CD8-positive, alpha-beta T cell (primary cell): ENCODE measurements at regions of chr19 and their contacts with region 1.

Region 1: GRCh38 chr19:12294249-12295158 is at the start of gene ZNF44:
- DNase-seq: peak; percentile 91 to 97 (median 95)
- ATAC-seq: peak; percentile 96
- H3K4me3 ChIP-seq: peak within 1 kb of the TSS; percentile 82 to 85
- H3K4me3 Mint-ChIP-seq: peak within 1 kb of the TSS; percentile 99
- H3K27ac ChIP-seq: peak within 1 kb of the TSS; percentile 75 to 84
- H3K27ac Mint-ChIP-seq: peak within 1 kb of the TSS; percentile 98
- H3K4me1 ChIP-seq: peaks cover 23% of the 10 kb centered on the region
- H3K4me1 Mint-ChIP-seq: peaks cover 43% of the 10 kb centered on the region
- H3K27me3 ChIP-seq: no peaks in the 10 kb centered on the region
- H3K27me3 Mint-ChIP-seq: no peaks in the 10 kb centered on the region
- CTCF ChIP-seq: no peak
- total RNA-seq, gene ZNF44: 21.9 to 22.0 TPM

Region 2: DNA sequence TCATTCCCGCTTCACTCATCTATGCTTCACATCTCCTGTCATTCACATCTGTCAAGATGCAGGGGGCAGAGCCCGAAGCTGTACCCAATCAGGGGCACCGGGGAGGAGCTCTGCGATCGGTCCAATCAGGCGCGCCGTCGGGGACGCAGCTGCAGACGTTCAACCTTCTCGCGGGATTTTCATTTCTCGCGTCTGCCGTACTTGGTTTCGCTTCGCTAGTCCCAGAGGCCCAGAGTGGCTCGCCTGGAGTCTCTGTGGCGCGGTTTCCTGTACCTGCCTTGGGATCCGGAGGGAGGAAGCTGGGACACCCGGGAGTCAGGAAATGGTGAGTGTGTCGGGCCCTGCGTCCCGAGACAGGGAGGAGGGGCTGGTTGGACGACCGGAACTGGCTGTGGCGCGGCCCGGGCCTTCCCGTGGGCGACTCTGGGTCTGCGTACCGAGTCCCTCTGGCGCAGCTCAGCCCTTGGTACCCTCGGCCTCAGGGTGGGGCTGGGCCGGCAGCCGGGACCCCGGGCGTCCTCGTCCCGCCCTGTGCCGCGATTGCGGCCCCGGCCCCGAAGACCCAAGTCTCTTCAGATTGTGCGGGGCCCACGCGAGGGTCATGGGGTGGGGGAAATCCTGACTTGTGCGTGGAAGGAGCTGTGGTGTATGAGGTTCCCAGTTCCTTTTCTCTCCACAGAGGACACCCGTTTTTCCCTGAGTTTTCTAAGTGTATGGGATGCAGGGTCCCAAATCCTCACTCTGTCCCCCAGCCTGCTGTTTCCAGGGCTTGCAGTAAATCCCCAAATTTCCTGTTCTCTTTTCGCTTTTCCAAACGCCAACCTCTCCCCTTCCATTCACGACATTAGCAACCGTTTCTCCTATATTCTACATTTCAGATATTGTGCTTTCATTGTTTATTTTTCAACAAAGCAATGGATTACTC is 131.4 kb before region 1 on chr19 and contains the start of gene ZNF136:
- CTCF ChIA-PET with region 1: no interaction called
- POLR2A ChIA-PET with region 1: interaction called, 3 read pairs
- intact Hi-C with region 1: loop called in 1 of 2 experiments (anchors 1 kb)
- DNase-seq: peak; percentile 84 to 97 (median 91)
- ATAC-seq: peak; percentile 99
- H3K4me3 ChIP-seq: peak within 1 kb of the TSS; percentile 83 to 86
- H3K4me3 Mint-ChIP-seq: peak within 1 kb of the TSS; percentile 96
- H3K27ac ChIP-seq: peak within 1 kb of the TSS; percentile 93 to 96
- H3K27ac Mint-ChIP-seq: peak within 1 kb of the TSS; percentile 98
- H3K4me1 ChIP-seq: peaks cover 25% of the 10 kb centered on the region
- H3K4me1 Mint-ChIP-seq: peaks cover 46% of the 10 kb centered on the region
- H3K27me3 ChIP-seq: no peaks in the 10 kb centered on the region
- H3K27me3 Mint-ChIP-seq: no peaks in the 10 kb centered on the region
- CTCF ChIP-seq: no peak
- total RNA-seq, gene ZNF136: 41.7 to 42.1 TPM

Region 3: DNA sequence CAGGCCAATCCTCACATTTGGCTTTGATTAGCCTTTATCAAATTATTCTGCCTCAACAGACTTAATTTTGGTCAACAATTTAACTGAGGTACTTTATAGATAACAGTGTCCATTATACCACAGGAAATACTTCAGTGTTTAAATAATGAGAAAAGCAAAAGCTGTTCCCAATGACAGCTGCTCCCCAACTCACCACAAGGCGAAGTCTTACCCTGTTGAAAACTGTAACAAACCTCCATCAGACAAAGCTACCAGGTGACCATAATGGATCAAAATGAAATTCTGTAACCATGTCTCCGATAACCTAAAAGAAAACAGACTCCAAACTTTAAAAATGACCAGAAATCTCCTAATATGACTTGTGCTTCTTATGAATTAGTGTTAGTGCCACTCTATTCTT is 50.1 kb before region 1 on chr19:
- CTCF ChIA-PET with region 1: no interaction called
- POLR2A ChIA-PET with region 1: no interaction called
- intact Hi-C with region 1: no loop called
- DNase-seq: peak in 1 of 9 experiments; percentile 10
- ATAC-seq: no peak
- H3K4me3 ChIP-seq: no peak overlapping the region
- H3K4me3 Mint-ChIP-seq: no peak overlapping the region
- H3K27ac ChIP-seq: no peak overlapping the region
- H3K27ac Mint-ChIP-seq: no peak overlapping the region
- H3K4me1 ChIP-seq: no peaks in the 10 kb centered on the region
- H3K4me1 Mint-ChIP-seq: no peaks in the 10 kb centered on the region
- H3K27me3 ChIP-seq: no peaks in the 10 kb centered on the region
- H3K27me3 Mint-ChIP-seq: no peaks in the 10 kb centered on the region
- CTCF ChIP-seq: no peak

Region 4: DNA sequence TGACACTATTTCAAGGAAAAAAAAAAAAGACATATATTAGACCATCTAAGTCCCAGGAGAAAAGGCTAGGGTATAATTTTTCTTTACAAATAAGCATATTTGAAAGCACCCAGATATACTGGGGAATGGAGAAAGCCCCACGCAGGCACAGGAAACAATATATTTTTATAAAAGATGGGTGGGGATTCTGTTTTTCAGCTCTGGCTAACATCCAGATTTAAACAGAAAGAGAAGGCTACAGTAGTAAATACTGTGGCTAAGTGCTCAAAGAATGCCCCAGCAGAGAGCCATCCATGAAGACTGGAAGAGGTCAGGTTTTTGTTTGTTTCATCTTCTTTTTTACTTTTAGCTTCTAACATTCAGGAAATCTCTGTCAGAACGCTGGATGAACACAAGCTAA is 15.8 kb before region 1 on chr19:
- CTCF ChIA-PET with region 1: no interaction called
- POLR2A ChIA-PET with region 1: interaction called, 6 read pairs
- intact Hi-C with region 1: loop called in 1 of 2 experiments (anchors 2 kb)
- DNase-seq: peak in 1 of 9 experiments; percentile 13
- ATAC-seq: no peak
- H3K4me3 ChIP-seq: no peak overlapping the region
- H3K4me3 Mint-ChIP-seq: no peak overlapping the region
- H3K27ac ChIP-seq: no peak overlapping the region
- H3K27ac Mint-ChIP-seq: peak overlapping the region; percentile 88
- H3K4me1 ChIP-seq: peaks cover 16% of the 10 kb centered on the region
- H3K4me1 Mint-ChIP-seq: peaks cover 51% of the 10 kb centered on the region
- H3K27me3 ChIP-seq: no peaks in the 10 kb centered on the region
- H3K27me3 Mint-ChIP-seq: no peaks in the 10 kb centered on the region
- CTCF ChIP-seq: no peak

Region 5: GRCh38 chr19:12365236-12366162 is 71.0 kb after region 1 on chr19 and contains the start of gene ZNF442:
- CTCF ChIA-PET with region 1: no interaction called
- POLR2A ChIA-PET with region 1: interaction called, 5 read pairs
- intact Hi-C with region 1: loop called in 1 of 2 experiments (anchors 1 kb)
- DNase-seq: peak; percentile 54 to 91 (median 85)
- ATAC-seq: peak; percentile 98
- H3K4me3 ChIP-seq: peak within 1 kb of the TSS; percentile 64 to 65
- H3K4me3 Mint-ChIP-seq: peak within 1 kb of the TSS; percentile 97
- H3K27ac ChIP-seq: peak within 1 kb of the TSS in 1 of 2 experiments; percentile 34
- H3K27ac Mint-ChIP-seq: peak within 1 kb of the TSS; percentile 84
- H3K4me1 ChIP-seq: peaks cover 13% of the 10 kb centered on the region
- H3K4me1 Mint-ChIP-seq: peaks cover 24% of the 10 kb centered on the region
- H3K27me3 ChIP-seq: peaks cover 0 to 2% of the 10 kb centered on the region in 2 experiments
- H3K27me3 Mint-ChIP-seq: no peaks in the 10 kb centered on the region
- CTCF ChIP-seq: no peak
- total RNA-seq, gene ZNF442: 1.00 to 1.0 TPM

Region 6: DNA sequence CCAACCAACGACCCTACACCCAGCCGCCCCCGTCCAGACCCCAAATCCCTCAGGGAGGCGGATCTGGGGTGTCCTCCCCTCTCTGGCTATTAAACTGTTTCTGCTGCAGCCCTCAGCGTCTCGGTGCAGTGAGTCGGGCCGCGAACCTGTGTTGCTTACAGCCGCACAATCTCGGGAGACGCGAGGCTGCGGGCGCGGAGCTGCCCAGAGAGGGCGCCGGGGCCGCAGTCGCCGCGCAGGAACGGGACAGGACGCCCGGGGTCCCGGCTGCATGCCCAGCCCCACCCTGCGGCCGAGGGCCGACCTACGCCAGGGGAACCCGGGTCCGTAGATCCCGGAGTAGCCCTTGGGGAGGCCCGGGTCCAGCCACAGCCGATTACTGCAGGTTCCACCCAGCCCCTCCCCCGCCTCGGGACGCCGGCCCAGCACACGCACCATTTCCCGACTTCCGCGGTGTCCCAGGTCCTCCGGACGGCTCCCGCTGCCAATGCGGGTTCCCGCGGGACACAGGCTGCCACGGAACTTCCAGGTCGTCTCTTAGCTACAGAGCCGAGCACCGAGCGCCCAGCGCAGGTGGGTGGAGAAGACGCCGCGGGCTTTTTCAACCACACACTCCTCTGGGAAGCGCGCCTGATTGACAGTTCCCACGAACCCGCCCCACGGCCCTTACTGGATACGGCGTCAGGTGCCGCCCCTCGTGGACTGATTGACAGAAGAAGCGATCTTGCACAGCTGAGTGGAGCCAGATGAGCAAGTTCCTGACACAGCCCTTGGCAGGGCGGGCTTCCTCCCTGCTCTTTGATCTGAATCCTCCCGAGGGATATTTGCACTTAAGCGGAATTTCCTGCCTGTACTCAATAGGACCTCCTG is 106.4 kb after region 1 on chr19 and contains the start of gene ZNF799:
- CTCF ChIA-PET with region 1: no interaction called
- POLR2A ChIA-PET with region 1: no interaction called
- intact Hi-C with region 1: loop called in 1 of 2 experiments (anchors 2 kb)
- DNase-seq: peak; percentile 38 to 88 (median 81)
- ATAC-seq: peak; percentile 91
- H3K4me3 ChIP-seq: peak within 1 kb of the TSS; percentile 94 to 96
- H3K4me3 Mint-ChIP-seq: peak within 1 kb of the TSS; percentile 90
- H3K27ac ChIP-seq: peak within 1 kb of the TSS; percentile 37 to 58
- H3K27ac Mint-ChIP-seq: peak within 1 kb of the TSS; percentile 81
- H3K4me1 ChIP-seq: peaks cover 4% of the 10 kb centered on the region
- H3K4me1 Mint-ChIP-seq: peaks cover 27% of the 10 kb centered on the region
- H3K27me3 ChIP-seq: no peaks in the 10 kb centered on the region
- H3K27me3 Mint-ChIP-seq: no peaks in the 10 kb centered on the region
- CTCF ChIP-seq: no peak
- total RNA-seq, gene ZNF799: 1.1 TPM

Region 7: DNA sequence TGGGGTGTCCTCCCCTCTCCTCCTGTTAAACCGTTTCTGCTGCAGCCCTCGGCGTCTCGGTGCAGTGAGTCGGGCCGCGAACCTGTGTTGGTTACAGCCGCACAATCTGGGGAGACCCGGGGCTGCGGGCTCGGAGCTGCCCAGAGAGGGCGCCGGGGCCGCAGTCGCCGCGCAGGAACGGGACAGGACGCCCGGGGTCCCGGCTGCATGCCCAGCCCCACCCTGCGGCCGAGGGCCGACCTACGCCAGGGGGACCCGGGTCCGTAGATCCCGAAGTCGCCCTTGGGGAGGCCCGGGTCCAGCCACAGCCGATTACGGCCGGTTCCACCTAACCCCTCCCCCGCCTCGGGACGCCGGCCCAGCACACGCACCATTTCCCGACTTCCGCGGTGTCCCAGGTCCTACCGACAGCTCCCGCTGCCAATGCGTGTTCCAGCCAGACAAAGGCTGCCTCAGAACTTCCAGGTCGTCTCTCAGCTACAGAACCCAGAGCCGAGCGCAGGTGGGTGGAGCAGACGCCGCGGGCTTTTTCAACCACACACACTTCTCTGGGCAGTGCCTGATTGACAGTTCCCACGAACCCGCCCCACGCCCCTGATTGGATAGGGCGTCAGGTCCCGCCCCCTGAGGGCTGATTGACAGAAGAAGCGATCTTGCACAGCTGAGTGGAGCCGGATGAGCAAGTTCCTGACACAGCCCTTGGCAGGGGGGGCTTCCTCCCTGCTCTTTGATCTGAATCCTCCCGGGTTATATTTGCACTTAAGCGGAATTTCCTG is 146.2 kb after region 1 on chr19 and contains the start of gene ZNF443:
- CTCF ChIA-PET with region 1: no interaction called
- POLR2A ChIA-PET with region 1: interaction called, 3 read pairs
- intact Hi-C with region 1: loop called (anchors 1 to 2 kb)
- DNase-seq: peak; percentile 97 to 99 (median 98)
- ATAC-seq: peak; percentile 97
- H3K4me3 ChIP-seq: peak within 1 kb of the TSS; percentile 55 to 87
- H3K4me3 Mint-ChIP-seq: peak within 1 kb of the TSS; percentile 100
- H3K27ac ChIP-seq: peak within 1 kb of the TSS; percentile 26 to 46
- H3K27ac Mint-ChIP-seq: peak within 1 kb of the TSS; percentile 92
- H3K4me1 ChIP-seq: no peaks in the 10 kb centered on the region
- H3K4me1 Mint-ChIP-seq: peaks cover 19% of the 10 kb centered on the region
- H3K27me3 ChIP-seq: no peaks in the 10 kb centered on the region
- H3K27me3 Mint-ChIP-seq: no peaks in the 10 kb centered on the region
- CTCF ChIP-seq: no peak
- total RNA-seq, gene ZNF443: 2.1 to 2.6 TPM

Region 8: DNA sequence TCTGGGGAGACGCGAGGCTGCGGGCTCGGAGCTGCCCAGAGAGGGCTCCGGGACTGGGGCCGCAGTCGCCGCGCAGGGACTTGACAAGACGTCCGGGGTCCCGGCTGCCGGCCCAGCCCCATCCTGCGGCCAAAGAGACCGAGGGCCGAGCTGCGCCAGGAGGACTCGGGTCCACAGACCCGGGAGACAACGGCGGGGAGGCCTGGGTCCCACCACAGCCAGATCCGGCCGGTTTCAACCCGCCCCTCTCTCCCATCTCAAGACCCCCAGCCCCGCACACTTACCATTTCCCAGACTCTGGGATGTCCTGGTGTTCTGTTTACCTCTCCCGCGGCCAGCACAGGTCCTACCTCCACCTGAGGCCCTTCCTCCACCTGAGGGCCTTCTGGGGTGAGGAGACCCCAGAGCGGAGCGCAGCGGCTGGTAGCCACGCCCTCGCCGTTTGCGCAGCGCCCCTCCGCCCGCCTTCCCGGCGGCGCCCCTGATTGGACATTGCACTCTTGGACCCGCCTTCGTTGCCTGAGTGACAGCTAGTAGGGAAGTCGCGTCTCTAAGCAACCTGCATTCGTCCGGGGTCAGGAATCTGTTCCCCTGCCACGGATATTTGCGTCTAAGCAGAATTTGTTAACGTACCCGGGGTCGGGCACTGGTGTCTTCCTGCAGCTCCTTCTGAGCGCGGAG is 190.0 kb after region 1 on chr19 and contains the start of gene ZNF709:
- CTCF ChIA-PET with region 1: no interaction called
- POLR2A ChIA-PET with region 1: no interaction called
- intact Hi-C with region 1: loop called in 1 of 2 experiments (anchors 10 kb)
- DNase-seq: peak; percentile 78 to 93 (median 90)
- ATAC-seq: peak; percentile 98
- H3K4me3 ChIP-seq: peak within 1 kb of the TSS; percentile 92 to 93
- H3K4me3 Mint-ChIP-seq: peak within 1 kb of the TSS; percentile 94
- H3K27ac ChIP-seq: peak within 1 kb of the TSS; percentile 73 to 76
- H3K27ac Mint-ChIP-seq: peak within 1 kb of the TSS; percentile 94
- H3K4me1 ChIP-seq: peaks cover 23% of the 10 kb centered on the region
- H3K4me1 Mint-ChIP-seq: peaks cover 31% of the 10 kb centered on the region
- H3K27me3 ChIP-seq: no peaks in the 10 kb centered on the region
- H3K27me3 Mint-ChIP-seq: no peaks in the 10 kb centered on the region
- CTCF ChIP-seq: no peak
- total RNA-seq, gene ZNF709: 4.3 to 4.5 TPM

Region 9: GRCh38 chr19:12551060-12551832 is 256.7 kb after region 1 on chr19 and contains the start of gene ZNF564:
- CTCF ChIA-PET with region 1: no interaction called
- POLR2A ChIA-PET with region 1: no interaction called
- intact Hi-C with region 1: no loop called
- DNase-seq: peak; percentile 85 to 98 (median 92)
- ATAC-seq: peak; percentile 98
- H3K4me3 ChIP-seq: peak within 1 kb of the TSS; percentile 59 to 94
- H3K4me3 Mint-ChIP-seq: peak within 1 kb of the TSS; percentile 98
- H3K27ac ChIP-seq: peak within 1 kb of the TSS; percentile 88 to 91
- H3K27ac Mint-ChIP-seq: peak within 1 kb of the TSS; percentile 97
- H3K4me1 ChIP-seq: peaks cover 25% of the 10 kb centered on the region
- H3K4me1 Mint-ChIP-seq: peaks cover 51% of the 10 kb centered on the region
- H3K27me3 ChIP-seq: no peaks in the 10 kb centered on the region
- H3K27me3 Mint-ChIP-seq: no peaks in the 10 kb centered on the region
- CTCF ChIP-seq: no peak
- total RNA-seq, gene ZNF564: 17.8 to 18.2 TPM